Lower lobe of right lung (tissue), 2 donors: ENCODE measurements at regions of chr7 and their contacts with region 1.

Region 1: GRCh38 chr7:22110227-22110839 is 164.6 kb upstream of the CDCA7L start:
- DNase-seq: no peak
- ATAC-seq: peak; percentile 78 to 84
- H3K4me3 ChIP-seq: no peak overlapping the region
- H3K27ac ChIP-seq: no peak overlapping the region
- H3K4me1 ChIP-seq: peaks cover 10% of the 10 kb centered on the region
- H3K27me3 ChIP-seq: no peaks in the 10 kb centered on the region
- CTCF ChIP-seq: peak; percentile 69

Region 2: DNA sequence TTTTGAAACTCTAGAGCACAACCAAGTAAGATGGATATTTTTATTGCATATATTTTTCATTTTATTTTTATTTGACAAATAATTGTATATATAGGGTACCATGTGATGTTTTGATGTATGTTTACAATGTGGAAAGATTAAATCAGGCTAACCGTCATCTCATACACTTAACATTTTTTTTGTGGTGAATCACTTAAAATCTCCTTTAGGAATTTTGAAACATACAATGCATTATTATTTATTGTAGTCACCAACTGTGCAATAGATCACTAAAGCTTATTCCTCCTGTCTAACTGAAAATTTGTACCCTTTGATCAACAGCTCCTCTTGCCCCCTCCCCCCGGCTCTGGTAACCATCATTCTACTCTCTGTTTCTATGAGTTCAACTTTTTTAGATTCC is 490.3 kb before region 1 on chr7:
- intact Hi-C with region 1: no loop called
- DNase-seq: no peak
- ATAC-seq: no peak
- H3K4me3 ChIP-seq: no peak overlapping the region
- H3K27ac ChIP-seq: no peak overlapping the region
- H3K4me1 ChIP-seq: peaks cover 5% of the 10 kb centered on the region
- H3K27me3 ChIP-seq: no peaks in the 10 kb centered on the region
- CTCF ChIP-seq: no peak

Region 3: GRCh38 chr7:22292516-22292915 is 182.2 kb after region 1 on chr7:
- intact Hi-C with region 1: loop called (anchors 5 kb)
- DNase-seq: no peak
- ATAC-seq: no peak
- H3K4me3 ChIP-seq: no peak overlapping the region
- H3K27ac ChIP-seq: no peak overlapping the region
- H3K4me1 ChIP-seq: peaks cover 13% of the 10 kb centered on the region
- H3K27me3 ChIP-seq: no peaks in the 10 kb centered on the region
- CTCF ChIP-seq: no peak

Region 4: DNA sequence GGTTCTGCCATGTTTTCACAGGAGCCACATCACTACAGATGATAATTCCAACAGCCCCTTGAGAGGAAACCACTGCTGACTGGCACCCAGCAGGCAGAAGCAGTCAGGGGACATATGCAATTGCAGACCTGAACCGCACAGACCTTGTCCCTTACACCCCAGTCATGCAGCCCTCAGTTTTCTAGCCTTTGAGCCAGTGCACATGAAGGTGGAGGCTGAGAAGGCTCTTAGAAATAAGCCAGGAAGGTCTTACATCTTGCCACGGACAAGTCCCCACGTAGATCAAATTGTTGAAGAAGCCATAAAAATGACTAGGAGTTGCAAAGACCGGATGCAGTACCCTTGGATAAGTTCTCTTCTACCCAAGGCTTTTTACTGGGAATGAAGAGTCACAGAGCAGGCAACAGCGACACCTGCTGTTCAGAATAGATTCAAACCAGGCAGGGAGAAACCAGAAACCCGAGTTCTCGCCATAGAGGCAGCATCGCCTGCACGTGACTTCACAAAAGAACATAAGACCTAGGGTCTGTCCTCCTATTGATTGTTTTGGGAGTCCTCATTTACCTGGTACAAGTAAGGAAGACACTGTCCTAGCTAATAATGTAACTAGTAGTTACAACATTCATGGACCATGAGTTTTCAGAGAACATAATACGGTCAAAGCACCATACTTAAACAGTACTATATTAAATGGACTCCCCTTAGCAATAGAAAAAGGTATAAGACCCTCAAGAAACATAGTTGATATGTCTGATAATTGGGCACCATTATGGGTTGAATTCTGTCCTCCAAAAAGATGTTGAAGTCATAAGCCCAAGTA is 378.5 kb after region 1 on chr7:
- intact Hi-C with region 1: loop called (anchors 5 kb)
- DNase-seq: peak; percentile 51
- ATAC-seq: peak; percentile 90 to 92
- H3K4me3 ChIP-seq: no peak overlapping the region
- H3K27ac ChIP-seq: no peak overlapping the region
- H3K4me1 ChIP-seq: peaks cover 5% of the 10 kb centered on the region
- H3K27me3 ChIP-seq: no peaks in the 10 kb centered on the region
- CTCF ChIP-seq: peak; percentile 91